ENCODE measurements at regions of chr9 and their contacts with region 1.

Region 1: GRCh38 chr9:130847327-130848217 is 12.5 kb downstream of the ABL1 start:
- DNase-seq: no peak
- H3K4me3 ChIP-seq: no peak overlapping the region; a peak in 2 of 8 replicates
- H3K27ac ChIP-seq: peak overlapping the region; percentile 62
- H3K4me1 ChIP-seq: peaks cover 4 to 24% (median 13%) of the 10 kb centered on the region in 4 experiments
- H3K27me3 ChIP-seq: no peaks in the 10 kb centered on the region
- CTCF ChIP-seq: peak; percentile 18 to 44 (median 30); a peak in 3 of 4 replicates
- EP300 ChIP-seq: no peak
- POLR2A ChIP-seq: no peak
- RAD21 ChIP-seq: 0 out of 4 replicates have a peak, but pooled peaks of 1 of the 2 experiments have one; percentile 12

Region 2: DNA sequence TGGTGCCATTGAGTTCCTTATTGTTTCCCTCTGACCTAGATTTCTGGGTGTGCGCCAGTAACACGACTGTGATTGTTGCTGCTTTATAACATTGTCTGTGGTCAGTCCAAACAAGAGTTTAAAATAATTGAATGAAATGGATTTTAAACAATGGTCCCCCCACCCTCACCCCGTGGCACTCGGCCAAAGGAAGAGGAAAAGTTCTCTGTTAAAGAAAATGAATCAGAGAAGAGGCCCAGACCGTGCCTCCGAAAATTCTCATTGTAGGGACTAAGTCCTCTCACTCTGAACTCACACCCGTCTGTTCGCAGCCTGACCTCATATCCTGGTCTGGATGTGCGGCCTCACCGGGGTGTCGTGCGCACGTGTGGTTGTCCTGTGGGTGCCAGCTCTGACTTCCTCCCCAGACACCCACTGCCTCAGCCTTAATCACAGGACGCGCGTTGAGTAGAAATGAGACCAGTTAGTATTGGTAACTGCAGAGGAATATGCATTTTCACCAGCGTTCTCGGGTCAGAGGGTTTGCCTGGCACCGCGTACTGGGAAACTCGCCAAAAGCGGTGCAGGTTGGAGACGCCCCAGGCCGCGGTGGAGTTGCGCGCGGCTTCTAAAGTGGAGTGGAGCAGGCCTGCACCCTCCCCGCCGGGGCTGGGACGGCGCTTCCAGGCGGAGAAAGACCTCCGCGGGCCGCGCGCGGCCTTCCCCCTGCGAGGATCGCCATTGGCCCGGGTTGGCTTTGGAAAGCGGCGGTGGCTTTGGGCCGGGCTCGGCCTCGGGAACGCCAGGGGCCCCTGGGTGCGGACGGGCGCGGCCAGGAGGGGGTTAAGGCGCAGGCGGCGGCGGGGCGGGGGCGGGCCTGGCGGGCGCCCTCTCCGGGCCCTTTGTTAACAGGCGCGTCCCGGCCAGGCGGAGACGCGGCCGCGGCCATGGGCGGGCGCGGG is 12.9 kb before region 1 on chr9 and contains the start of gene ABL1:
- CTCF ChIA-PET with region 1: interaction called, 11 read pairs
- POLR2A ChIA-PET with region 1: interaction called, 10 read pairs
- DNase-seq: peak in 1 of 2 experiments; percentile 80
- H3K4me3 ChIP-seq: peak within 1 kb of the TSS; percentile 84 to 98 (median 91)
- H3K27ac ChIP-seq: peak within 1 kb of the TSS; percentile 72
- H3K4me1 ChIP-seq: peaks cover 9 to 22% (median 14%) of the 10 kb centered on the region in 4 experiments
- H3K27me3 ChIP-seq: no peaks in the 10 kb centered on the region
- CTCF ChIP-seq: no peak
- EP300 ChIP-seq: no peak
- POLR2A ChIP-seq: peak in 1 of 2 experiments; percentile 13; a peak in 1 of 3 replicates
- RAD21 ChIP-seq: no peak
- total RNA-seq, gene ABL1: 104 and 110 TPM in 2 replicates

Measured in H1 (cell line).